ENCODE measurements at regions of chr2 and their contacts with region 1.

Region 1: GRCh38 chr2:8514796-8515758 is 166.8 kb upstream of the ID2 start:
- DNase-seq: peak; percentile 58
- H3K4me3 Mint-ChIP-seq: peak overlapping the region; percentile 35
- H3K27ac Mint-ChIP-seq: peak overlapping the region; percentile 95
- H3K4me1 Mint-ChIP-seq: peaks cover 68% of the 10 kb centered on the region
- H3K27me3 Mint-ChIP-seq: no peaks in the 10 kb centered on the region

Region 2: DNA sequence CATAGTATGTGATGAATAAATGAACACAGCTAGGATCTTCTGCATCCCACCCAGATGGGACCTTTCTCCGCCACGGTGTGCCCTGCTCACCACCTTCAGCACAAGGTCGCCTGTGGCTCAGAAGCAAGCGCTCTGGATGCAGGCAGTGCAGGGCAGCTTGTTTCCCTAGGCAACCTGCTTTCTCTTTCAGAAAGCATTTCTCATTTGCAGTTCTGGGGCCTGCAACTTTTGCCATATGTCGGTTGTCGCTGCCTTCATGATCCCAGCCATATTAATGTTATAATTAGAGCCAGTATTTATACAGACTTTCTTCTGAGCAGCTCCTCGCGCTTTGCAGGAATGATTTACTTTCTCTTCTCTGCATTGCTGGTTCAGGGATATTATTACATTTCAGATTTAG is 905.1 kb before region 1 on chr2:
- intact Hi-C with region 1: no loop called
- DNase-seq: no peak
- H3K4me3 Mint-ChIP-seq: no peak overlapping the region
- H3K27ac Mint-ChIP-seq: peak overlapping the region; percentile 62
- H3K4me1 Mint-ChIP-seq: peaks cover 41% of the 10 kb centered on the region
- H3K27me3 Mint-ChIP-seq: no peaks in the 10 kb centered on the region

Region 3: DNA sequence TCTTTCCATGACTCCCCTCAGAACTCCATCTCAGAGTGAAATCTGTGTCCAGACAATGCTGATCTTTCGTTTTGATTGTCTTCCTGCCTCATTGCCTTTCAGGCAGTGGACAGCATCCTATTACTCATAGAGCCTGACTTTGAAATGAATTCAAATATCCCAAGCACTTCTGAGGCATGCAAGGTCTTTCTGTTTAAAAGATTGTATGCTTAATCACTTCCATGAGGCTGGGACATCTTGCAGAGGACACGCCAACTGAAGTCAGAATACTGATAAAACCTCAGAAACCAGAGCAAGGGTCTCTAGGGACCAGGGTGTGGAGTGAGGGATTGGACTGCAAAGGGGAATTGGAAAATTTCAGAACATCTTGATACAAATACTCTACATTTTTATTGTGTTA is 669.7 kb before region 1 on chr2:
- intact Hi-C with region 1: loop called (anchors 1 kb)
- DNase-seq: no peak
- H3K4me3 Mint-ChIP-seq: no peak overlapping the region
- H3K27ac Mint-ChIP-seq: no peak overlapping the region
- H3K4me1 Mint-ChIP-seq: peaks cover 57% of the 10 kb centered on the region
- H3K27me3 Mint-ChIP-seq: no peaks in the 10 kb centered on the region

Region 4: GRCh38 chr2:7984693-7985353 is 530.3 kb before region 1 on chr2:
- intact Hi-C with region 1: loop called (anchors 10 kb)
- DNase-seq: no peak
- H3K4me3 Mint-ChIP-seq: peak overlapping the region; percentile 12
- H3K27ac Mint-ChIP-seq: peak overlapping the region; percentile 82
- H3K4me1 Mint-ChIP-seq: peaks cover 28% of the 10 kb centered on the region
- H3K27me3 Mint-ChIP-seq: no peaks in the 10 kb centered on the region

Region 5: GRCh38 chr2:8234757-8235374 is 280.2 kb before region 1 on chr2:
- intact Hi-C with region 1: loop called (anchors 1 kb)
- DNase-seq: no peak
- H3K4me3 Mint-ChIP-seq: no peak overlapping the region
- H3K27ac Mint-ChIP-seq: no peak overlapping the region
- H3K4me1 Mint-ChIP-seq: peaks cover 53% of the 10 kb centered on the region
- H3K27me3 Mint-ChIP-seq: peaks cover 9% of the 10 kb centered on the region

Region 6: GRCh38 chr2:8456151-8456845 is 58.8 kb before region 1 on chr2:
- intact Hi-C with region 1: loop called (anchors 1 kb)
- DNase-seq: peak; percentile 58
- H3K4me3 Mint-ChIP-seq: peak overlapping the region; percentile 66
- H3K27ac Mint-ChIP-seq: peak overlapping the region; percentile 88
- H3K4me1 Mint-ChIP-seq: peaks cover 56% of the 10 kb centered on the region
- H3K27me3 Mint-ChIP-seq: peaks cover 22% of the 10 kb centered on the region

Region 7: DNA sequence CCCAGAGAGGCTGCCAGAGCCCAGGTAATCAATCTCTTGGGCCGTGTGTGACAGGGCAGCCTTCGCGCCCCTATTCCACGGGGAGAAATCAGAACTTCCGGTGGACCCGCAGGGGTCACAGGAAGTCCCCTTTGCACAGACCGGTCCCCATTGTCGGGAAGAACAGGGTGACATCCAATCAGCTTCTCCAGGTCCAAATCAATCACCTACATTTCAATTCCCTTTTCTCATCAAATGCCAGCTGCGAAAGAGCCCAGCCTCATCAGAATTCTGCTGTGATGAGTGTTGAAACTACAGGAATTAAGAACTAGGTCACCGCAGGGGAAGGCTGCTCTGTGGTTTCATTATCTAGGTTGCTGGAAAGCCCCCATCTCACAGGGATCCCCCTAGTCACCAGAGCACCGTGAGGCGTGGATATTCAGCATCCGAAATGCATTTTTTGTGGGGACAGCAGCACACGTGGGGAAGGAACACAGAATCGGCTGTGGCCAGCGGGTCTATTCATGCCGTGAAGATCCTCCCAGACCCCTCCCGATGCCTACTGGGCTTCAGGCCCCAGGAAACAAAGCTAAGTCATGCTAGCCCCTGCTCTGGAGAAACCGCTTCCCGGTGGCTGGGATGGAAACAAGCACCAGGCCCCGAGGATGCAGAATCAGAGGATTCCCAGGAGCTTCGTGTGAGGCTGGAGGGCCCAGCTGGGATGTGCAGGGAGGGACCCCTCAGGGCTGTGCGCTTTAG is 26.9 kb before region 1 on chr2:
- intact Hi-C with region 1: loop called (anchors 1 kb)
- DNase-seq: peak; percentile 57
- H3K4me3 Mint-ChIP-seq: peak overlapping the region; percentile 75
- H3K27ac Mint-ChIP-seq: peak overlapping the region; percentile 86
- H3K4me1 Mint-ChIP-seq: peaks cover 61% of the 10 kb centered on the region
- H3K27me3 Mint-ChIP-seq: no peaks in the 10 kb centered on the region

Measured in activated T-helper 1 cell treated with anti-CD3 and anti-CD28 coated beads, Interleukin-12 subunit alpha, Interleukin-12 subunit beta, Interleukin-2, Interleukin-4 antibody, amounts not matched to agents 30 ng/mL and 10 ng/mL and 1 ng/mL, durations not matched to agents 14 hours and 24 hours and 36 hours (primary cell).